Activated CD4-positive, alpha-beta T cell treated with anti-CD3 and anti-CD28 coated beads for 36 hours (primary cell): ENCODE measurements at regions of chr3 and their contacts with region 1.

Region 1: DNA sequence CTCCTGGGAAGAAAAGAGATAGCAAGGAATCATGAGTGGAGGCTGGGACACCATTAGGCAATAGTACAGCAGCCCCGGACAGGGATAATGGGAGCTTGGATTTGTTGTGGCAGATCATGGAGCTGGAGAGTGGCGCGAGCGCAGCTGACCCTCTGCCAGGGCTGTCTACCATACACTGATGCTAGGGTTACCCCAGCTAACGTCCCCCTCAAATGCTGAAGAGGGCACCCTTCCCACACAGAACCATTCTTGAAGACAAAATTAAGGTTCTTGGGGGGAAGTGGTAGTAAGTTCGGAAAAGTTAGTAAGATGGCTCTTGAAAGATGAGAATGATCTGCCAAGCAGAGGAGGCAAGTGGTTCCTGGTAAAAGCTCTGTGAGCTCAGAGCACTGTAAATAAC is 61.1 kb downstream of the ST3GAL6 start:
- DNase-seq: no peak
- ATAC-seq: no peak
- H3K4me3 Mint-ChIP-seq: no peak overlapping the region
- H3K27ac Mint-ChIP-seq: no peak overlapping the region
- H3K4me1 Mint-ChIP-seq: no peaks in the 10 kb centered on the region
- H3K27me3 Mint-ChIP-seq: no peaks in the 10 kb centered on the region

Region 2: DNA sequence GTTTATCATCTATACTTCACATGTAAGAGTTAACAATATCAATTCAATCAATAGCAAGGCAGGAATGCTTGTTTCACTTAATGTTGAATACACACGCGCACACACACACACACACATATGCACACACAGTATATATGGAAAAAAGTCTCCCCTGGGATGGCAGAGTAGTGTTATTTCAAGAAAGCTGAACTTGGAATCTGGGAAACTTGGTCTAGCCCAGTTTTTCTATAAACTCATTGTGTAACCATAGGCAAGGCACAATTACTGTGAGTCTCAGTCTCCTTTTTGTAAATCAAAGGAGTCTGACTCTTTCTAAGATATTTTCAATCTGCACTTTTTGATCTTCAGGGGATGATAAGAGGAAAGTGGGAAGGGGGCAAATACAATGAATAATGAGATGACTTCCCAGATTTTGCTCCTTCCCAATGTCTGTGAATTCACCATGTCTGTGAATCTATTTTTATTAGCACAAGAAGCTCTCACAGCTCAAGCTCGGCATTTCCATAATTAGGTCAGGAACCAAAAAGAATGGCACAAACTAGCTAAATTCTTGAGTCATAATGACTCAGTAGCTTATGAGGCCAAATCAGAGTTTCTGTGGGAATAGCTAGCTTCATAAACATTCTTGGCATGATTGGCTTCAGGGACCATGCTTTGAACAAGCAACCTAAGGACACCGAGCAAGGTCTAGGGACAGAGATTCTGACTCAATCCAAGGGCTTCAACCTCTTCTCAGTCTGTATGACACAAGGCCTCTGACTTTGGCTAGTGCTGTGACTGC is 304.7 kb after region 1 on chr3:
- CTCF ChIA-PET with region 1: no interaction called
- POLR2A ChIA-PET with region 1: no interaction called
- intact Hi-C with region 1: no loop called
- DNase-seq: no peak
- ATAC-seq: no peak
- H3K4me3 Mint-ChIP-seq: no peak overlapping the region
- H3K27ac Mint-ChIP-seq: no peak overlapping the region
- H3K4me1 Mint-ChIP-seq: no peaks in the 10 kb centered on the region
- H3K27me3 Mint-ChIP-seq: no peaks in the 10 kb centered on the region

Region 3: DNA sequence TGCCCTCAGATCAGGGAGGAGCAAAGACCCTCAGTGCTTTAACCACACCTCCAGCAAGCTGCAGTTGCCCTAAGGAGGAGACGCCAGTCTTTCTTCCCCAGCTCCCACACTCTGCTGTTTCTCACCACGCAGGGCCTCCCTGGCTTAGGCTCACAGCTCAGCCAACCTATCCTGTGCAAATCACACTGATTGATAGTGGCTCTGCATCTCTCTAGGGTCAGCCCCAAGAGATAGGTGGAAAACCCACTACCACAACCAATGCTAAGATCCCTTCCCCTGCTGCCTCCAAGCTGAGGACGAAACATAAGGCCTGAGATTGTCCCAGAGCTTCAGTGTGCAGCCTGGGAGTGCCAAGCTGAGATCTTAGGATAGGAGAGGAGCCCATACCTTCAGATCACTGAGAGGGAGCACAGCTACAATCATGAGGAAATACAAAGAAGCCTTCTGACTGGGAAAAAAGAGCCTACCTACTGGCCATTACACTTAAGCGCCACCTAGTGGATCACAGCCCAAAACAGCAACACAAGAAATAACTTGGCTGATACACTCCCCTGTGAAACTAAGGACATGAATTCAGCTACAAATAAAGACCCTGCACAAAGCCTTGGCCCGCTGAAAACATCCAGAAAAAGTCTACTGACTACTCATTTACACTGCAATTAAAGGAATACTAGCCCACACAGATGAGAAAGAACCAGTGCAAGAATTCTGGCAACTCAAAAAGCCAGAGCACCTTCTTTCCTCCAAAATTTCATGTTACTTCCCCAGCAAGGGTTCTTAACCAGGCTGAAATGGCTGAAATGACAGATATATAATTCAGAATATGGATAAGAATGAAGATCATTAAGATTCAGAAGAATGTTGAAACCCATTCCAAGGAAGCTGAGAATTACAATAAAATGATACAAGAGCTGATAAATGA is 348.7 kb after region 1 on chr3:
- CTCF ChIA-PET with region 1: interaction called, 10 read pairs
- POLR2A ChIA-PET with region 1: no interaction called
- intact Hi-C with region 1: no loop called
- DNase-seq: peak; percentile 61
- ATAC-seq: peak; percentile 39
- H3K4me3 Mint-ChIP-seq: no peak overlapping the region
- H3K27ac Mint-ChIP-seq: no peak overlapping the region
- H3K4me1 Mint-ChIP-seq: no peaks in the 10 kb centered on the region
- H3K27me3 Mint-ChIP-seq: no peaks in the 10 kb centered on the region